ENCODE measurements at regions of chr13 and their contacts with region 1.

Region 1: DNA sequence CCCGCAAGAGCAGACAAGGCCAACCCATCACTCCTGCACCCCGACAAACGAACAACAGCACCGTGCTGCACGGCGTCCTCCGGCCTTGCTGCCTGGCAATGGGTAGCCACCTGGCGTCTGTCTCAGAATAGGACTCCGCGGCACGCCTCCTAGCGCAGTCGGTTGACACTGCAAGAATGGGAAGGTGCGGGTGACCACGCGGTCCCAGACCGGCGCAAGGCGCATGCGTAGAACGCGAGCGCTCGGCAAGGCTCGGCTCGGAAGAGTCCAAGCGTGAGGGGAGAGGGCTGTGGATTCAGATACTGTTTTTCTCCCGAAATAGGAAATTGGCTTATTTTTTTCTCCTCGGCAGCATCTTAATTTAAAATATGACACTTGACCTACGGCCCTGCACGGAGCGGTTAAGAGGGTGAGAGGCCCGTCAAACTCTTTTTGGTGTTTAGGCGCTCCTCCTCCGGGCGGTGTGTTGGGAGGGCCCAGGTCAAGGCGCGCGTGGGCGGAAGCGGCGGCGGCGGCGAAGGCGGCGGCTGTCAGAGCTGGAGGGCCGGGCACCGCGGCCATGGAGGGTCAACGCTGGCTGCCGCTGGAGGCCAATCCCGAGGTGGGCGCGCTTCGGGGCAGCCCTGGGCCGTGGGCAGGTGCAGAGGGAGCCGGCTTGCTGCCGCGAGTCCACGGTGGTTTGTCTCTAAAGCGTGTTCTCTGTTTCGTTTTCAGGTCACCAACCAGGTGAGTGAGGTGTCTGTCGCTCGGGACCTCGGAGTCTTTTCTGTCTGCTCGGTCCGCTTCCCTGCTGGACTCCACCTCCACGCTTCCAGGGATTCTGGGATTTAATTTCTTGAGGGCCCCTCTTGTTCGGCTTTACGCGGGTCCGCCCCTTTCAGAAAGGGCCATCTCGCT is at the start of gene UCHL3:
- DNase-seq: peak; percentile 97
- H3K4me3 ChIP-seq: peak within 1 kb of the TSS; percentile 73 to 97 (median 77)
- H3K27ac ChIP-seq: peak within 1 kb of the TSS; percentile 54 to 80 (median 72)
- H3K4me1 ChIP-seq: peaks cover 4 to 20% (median 17%) of the 10 kb centered on the region in 4 donors
- H3K27me3 ChIP-seq: no peaks in the 10 kb centered on the region
- CTCF ChIP-seq: peak; percentile 85 to 90 (median 87)
- EP300 ChIP-seq: no peak
- POLR2A ChIP-seq: no peak
- total RNA-seq, gene UCHL3: 11.2 to 32.3 (median 23.5) TPM

Region 2: GRCh38 chr13:75372517-75372916 is 177.0 kb before region 1 on chr13:
- intact Hi-C with region 1: loop called (anchors 2 kb)
- DNase-seq: no peak
- H3K4me3 ChIP-seq: no peak overlapping the region
- H3K27ac ChIP-seq: peak overlapping the region; percentile 22 to 44 (median 31)
- H3K4me1 ChIP-seq: peaks cover 23 to 47% (median 41%) of the 10 kb centered on the region in 4 donors
- H3K27me3 ChIP-seq: no peaks in the 10 kb centered on the region
- CTCF ChIP-seq: peak; percentile 74 to 85 (median 77)
- EP300 ChIP-seq: no peak
- POLR2A ChIP-seq: no peak

Region 3: GRCh38 chr13:75512253-75512652 is 37.3 kb before region 1 on chr13:
- intact Hi-C with region 1: no loop called
- DNase-seq: no peak
- H3K4me3 ChIP-seq: no peak overlapping the region
- H3K27ac ChIP-seq: no peak overlapping the region
- H3K4me1 ChIP-seq: no peaks in the 10 kb centered on the region
- H3K27me3 ChIP-seq: no peaks in the 10 kb centered on the region
- CTCF ChIP-seq: no peak
- EP300 ChIP-seq: no peak
- POLR2A ChIP-seq: no peak

Measured in esophagus muscularis mucosa (tissue), 4 donors.